HCT116 (cell line): ENCODE measurements at regions of chr2 and their contacts with region 1.

Region 1: DNA sequence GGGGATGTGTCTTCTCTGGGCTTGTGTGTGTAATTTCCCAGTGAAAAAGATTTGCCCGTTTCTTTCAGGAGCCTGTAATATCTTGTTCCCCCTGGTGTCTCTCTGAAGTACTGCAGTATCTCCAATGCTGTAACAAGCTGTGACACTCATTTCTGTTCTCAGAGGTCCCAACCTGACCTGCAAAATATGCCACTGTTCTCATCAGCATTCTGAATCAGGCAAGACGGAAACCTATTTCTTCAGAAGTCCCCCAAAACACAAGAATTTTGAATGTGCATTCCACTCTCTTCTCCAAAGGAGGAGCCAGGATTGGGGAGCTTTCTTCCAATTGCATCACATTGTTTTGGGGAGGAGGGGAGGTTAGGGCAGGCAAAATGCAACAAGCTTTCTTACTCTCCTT is 77.0 kb upstream of the CNGA3 start:
- DNase-seq: peak; percentile 64
- ATAC-seq: peak; percentile 91
- H3K4me3 ChIP-seq: no peak overlapping the region
- H3K27ac ChIP-seq: no peak overlapping the region
- H3K4me1 ChIP-seq: no peaks in the 10 kb centered on the region
- H3K27me3 ChIP-seq: no peaks in the 10 kb centered on the region
- CTCF ChIP-seq: peak; percentile 71 to 76 (median 75)
- POLR2A ChIP-seq: no peak
- RAD21 ChIP-seq: peak; percentile 77

Region 2: DNA sequence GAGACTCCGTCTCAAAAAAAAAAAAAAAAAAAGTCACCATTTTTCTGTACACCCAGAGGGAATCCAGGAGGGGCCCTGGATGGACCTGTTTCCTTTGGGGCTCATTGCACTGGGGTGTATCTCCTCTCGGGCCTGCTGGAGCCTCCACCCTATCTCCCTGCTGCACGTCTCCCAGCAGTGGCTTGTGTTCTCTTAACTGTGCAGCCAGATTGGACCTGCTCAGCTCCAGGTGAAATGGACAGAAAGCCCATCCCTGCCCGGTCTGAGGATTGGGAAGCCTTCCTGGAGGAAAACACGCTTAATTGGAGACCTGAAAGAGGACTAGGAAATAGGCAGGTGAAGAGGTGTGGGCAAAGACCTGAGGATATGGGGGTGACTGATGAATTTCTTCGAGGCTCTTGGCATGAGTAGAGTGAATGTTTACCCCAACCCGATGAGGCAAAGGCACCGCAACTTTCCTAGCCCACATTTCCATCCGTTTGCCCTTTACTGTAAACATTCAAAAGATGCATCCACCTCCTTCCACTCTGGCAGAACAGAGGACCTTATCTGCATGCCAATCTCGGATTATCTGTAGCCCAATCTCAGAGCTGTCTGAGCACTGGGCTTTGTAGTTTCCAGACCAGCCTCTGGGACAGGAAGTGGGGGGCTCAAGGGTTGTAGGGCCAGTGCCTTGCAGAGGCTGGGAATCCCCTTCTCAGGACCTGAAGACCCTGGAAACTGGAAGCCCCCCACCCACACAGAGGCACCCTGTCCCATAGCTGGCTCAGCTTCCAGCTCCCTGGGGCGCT is 558.5 kb before region 1 on chr2:
- CTCF ChIA-PET with region 1: interaction called, 8 read pairs
- POLR2A ChIA-PET with region 1: no interaction called
- RAD21 ChIA-PET with region 1: no interaction called
- intact Hi-C with region 1: loop called (anchors 1 kb)
- DNase-seq: no peak
- ATAC-seq: no peak
- H3K4me3 ChIP-seq: no peak overlapping the region
- H3K27ac ChIP-seq: no peak overlapping the region
- H3K4me1 ChIP-seq: peaks cover 0 to 6% of the 10 kb centered on the region in 2 experiments; a peak in 2 of 4 replicates
- H3K27me3 ChIP-seq: no peaks in the 10 kb centered on the region
- CTCF ChIP-seq: no peak
- POLR2A ChIP-seq: no peak
- RAD21 ChIP-seq: no peak

Region 3: DNA sequence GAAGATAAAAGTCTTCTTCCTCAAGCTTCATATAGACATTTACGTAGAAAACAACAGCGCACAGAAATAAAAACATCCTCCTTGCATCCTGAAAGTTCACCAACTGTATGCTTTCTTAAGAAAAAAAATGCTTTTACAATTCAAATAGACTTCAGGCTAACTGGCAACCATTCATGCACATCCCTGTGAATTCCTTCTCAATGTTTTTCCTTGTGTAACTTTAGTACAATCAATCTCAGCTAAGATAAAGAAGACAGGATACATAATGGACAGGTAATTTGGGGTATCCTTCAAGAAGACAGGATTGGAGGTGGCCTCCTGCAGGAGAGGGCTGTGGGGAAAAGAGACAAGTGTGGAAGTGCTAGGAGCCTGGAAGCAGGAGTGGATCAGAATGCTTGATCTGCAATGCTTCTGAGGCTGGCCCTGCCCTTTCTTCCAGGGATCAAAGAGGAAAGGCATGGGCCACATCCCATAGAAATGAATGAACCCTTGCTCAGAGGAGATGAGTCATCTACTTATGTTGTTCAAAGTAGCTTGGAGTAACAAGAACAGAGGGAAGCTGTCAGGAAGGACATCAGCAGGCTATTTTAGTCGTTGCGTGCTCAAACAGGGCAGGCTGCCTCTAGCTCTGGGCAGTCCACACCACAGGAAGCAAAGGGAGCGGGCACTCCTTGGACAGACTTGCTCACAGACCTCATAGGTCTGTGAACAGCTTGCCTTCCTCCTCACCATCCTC is 400.1 kb before region 1 on chr2:
- CTCF ChIA-PET with region 1: no interaction called
- POLR2A ChIA-PET with region 1: no interaction called
- RAD21 ChIA-PET with region 1: no interaction called
- intact Hi-C with region 1: loop called (anchors 5 kb)
- DNase-seq: peak; percentile 98
- ATAC-seq: peak; percentile 90
- H3K4me3 ChIP-seq: peak overlapping the region; percentile 18 to 41
- H3K27ac ChIP-seq: peak overlapping the region; percentile 84
- H3K4me1 ChIP-seq: peaks cover 51 to 75% of the 10 kb centered on the region in 2 experiments
- H3K27me3 ChIP-seq: no peaks in the 10 kb centered on the region
- CTCF ChIP-seq: no peak
- POLR2A ChIP-seq: no peak
- RAD21 ChIP-seq: peak; percentile 54

Region 4: DNA sequence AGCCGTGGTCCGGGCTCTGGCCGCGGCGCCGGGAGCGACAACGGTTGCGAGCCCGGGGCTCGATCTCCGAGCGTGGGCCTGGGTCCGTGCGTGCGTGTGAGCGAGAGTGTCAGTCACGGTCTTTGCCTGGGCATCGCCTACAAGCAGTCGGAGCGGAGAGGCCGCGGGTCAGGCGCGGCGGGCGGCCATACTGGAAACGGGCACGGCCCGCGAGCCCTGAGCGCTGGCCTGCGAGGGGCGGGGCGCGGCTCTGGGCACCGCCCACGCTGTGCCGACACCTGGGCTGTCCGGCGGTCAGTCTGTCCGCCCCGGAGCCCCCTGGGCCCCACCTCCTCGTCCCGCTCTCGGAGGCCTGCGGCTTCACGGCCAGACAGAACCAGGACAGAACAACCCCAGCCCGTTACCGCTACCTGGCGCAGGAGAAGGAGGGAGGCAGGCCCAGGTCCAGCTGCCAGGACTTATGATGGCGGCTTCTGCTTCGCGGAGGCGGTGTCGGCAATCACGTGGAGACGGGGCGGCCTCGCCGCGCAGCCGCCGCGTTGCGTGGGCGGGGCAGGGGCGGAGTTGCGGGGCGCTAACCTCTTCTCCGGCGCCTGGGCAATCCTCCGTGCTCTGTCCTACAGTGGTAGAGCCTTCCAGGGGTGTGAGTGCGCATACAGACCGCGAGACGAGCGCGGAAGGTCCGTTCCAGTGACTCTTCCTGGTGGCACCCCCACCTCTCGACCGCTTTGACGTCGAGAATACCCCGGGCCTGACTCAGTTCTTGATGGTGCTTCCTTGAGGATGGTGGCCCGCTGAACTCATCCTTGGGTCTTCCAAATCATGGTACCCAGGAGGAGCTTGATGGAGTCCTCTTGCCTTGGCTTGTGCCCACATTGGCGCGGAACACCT is 273.3 kb before region 1 on chr2 and contains the start of gene TMEM131:
- CTCF ChIA-PET with region 1: no interaction called
- POLR2A ChIA-PET with region 1: no interaction called
- RAD21 ChIA-PET with region 1: no interaction called
- intact Hi-C with region 1: loop called (anchors 10 kb)
- DNase-seq: peak; percentile 89
- ATAC-seq: peak; percentile 90
- H3K4me3 ChIP-seq: peak within 1 kb of the TSS; percentile 73 to 90
- H3K27ac ChIP-seq: peak within 1 kb of the TSS; percentile 97
- H3K4me1 ChIP-seq: peaks cover 7 to 40% of the 10 kb centered on the region in 2 experiments; a peak in 3 of 4 replicates
- H3K27me3 ChIP-seq: no peaks in the 10 kb centered on the region
- CTCF ChIP-seq: no peak
- POLR2A ChIP-seq: peak; percentile 24
- RAD21 ChIP-seq: no peak
- total RNA-seq, gene TMEM131: 51.5 TPM